Left ventricle myocardium superior (tissue), 1 donor: ENCODE measurements at regions of chr2 and their contacts with region 1.

Region 1: DNA sequence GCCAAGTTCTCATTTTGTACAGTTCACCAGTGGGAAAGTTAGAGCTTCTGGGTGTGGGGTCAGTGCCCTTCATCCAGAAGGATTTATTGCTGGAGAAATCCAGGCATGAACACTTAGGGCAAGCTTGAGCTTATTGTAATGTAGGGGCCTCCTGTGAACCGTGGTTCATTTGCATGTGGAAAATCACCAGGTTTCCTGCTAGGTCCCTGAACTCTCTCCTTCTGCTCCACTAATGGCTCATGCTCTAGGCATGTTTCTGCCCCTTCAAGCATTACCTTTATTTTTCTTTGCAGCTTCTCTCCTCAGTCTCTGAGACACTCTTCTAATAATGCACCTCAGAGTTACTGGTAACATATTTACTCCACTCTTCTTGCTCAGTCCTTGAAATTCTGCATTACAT is 79.3 kb upstream of the FAM98A start:
- DNase-seq: no peak
- ATAC-seq: no peak

Region 2: GRCh38 chr2:35415282-35415681 is 1736.8 kb after region 1 on chr2:
- intact Hi-C with region 1: loop called (anchors 5 kb)
- DNase-seq: no peak
- ATAC-seq: no peak